GM12878 (cell line): ENCODE measurements at regions of chr11 and their contacts with region 1.

Region 1: GRCh38 chr11:3091791-3092602 is 34.8 kb upstream of the CARS1 start:
- DNase-seq: peak; percentile 19
- ATAC-seq: peak; percentile 97
- H3K4me3 ChIP-seq: no peak overlapping the region
- H3K27ac ChIP-seq: no peak overlapping the region
- H3K4me1 ChIP-seq: no peaks in the 10 kb centered on the region
- H3K27me3 ChIP-seq: no peaks in the 10 kb centered on the region
- CTCF ChIP-seq: peak; percentile 98
- EP300 ChIP-seq: no peak
- POLR2A ChIP-seq: no peak
- RAD21 ChIP-seq: peak; percentile 85

Region 2: DNA sequence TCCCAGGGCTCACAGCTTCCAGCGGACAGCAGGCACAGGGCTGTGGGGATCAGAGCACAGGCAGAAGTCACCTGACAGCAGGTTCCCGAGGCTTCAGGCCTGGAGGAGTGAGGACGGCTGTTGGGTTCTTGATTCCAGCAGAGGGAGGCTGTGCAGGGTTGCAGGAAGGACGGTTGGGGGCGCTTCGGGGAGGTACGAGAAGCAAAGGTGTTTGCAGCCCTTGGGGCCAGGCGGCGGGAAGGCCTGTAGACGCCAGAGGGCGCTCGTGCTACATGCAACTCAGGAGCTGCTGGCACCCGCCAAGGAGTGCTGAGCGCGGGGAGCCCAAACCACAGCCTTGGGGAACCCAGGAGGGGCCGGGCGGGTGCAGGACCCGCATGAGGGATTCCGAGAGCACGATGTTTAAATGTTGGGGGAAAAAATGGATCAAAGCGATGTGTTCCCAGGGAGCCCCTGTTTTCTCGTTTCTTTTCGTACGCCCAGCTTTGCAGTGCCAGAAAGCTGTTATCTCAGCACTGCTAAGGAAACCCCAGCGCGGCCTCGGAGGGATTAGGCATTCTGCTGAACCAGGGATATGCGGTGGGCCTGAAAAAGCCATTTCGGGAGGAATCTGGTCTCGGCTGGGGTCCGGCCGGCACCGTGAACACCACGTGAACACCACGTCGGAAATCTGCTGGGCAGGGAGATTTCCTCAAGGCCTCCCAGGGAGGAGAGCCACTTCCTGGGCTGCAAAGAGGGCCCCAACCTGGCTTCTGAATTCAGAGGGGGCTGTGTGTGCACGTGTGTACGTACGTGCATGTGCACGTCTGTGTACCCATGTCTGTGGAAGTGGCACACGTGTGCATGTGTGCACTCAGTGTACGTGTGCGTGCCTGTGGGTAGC is 559.1 kb before region 1 on chr11:
- CTCF ChIA-PET with region 1: interaction called, 10 read pairs
- POLR2A ChIA-PET with region 1: no interaction called
- RAD21 ChIA-PET with region 1: interaction called, 17 read pairs
- SMC1A ChIA-PET with region 1: no interaction called
- in situ Hi-C with region 1: loop called (anchors 5 kb)
- intact Hi-C with region 1: loop called (anchors 5 kb)
- DNase-seq: peak; percentile 38
- ATAC-seq: peak; percentile 92
- H3K4me3 ChIP-seq: no peak overlapping the region
- H3K27ac ChIP-seq: no peak overlapping the region
- H3K4me1 ChIP-seq: peaks cover 8% of the 10 kb centered on the region
- H3K27me3 ChIP-seq: peaks cover 1 to 3% of the 10 kb centered on the region in 2 experiments; a peak in 1 of 4 replicates
- CTCF ChIP-seq: peak; percentile 94 to 98 (median 98)
- EP300 ChIP-seq: no peak
- POLR2A ChIP-seq: no peak
- RAD21 ChIP-seq: peak; percentile 93

Region 3: DNA sequence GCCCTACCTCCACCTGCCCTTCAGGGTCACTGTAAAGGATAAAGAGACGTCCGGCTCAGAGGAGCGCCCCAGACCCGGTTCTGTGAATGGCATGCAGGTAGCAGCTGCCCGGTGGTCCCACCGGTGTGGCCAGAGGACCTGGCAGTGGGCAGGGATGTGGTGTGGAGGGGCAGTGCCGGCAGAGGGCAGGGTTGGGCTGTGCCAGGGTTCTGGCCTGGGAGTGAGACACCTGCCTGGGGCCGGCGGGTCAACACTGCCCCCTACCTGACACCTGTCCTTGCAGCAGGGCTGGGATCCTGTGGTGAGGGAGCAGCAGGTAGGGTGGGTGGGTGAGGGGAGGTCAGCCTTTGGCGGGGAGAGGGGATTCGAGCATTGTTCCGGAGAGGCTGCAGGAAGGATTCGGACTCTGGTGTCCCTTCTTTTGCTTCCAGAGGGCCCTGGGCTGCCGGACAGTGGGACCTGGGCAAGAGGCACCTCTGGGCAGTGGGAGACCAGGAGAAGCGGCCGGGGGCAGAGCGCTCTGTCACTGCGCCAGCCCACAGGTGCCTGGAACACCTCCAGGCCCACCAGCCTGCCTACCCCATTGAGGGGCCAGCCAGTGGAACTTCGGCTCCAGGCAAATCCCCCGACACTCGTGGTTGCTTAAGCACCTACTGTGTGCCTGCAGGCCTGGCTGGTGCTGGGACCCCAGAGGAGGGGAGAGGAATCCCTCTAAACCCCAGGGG is 161.1 kb before region 1 on chr11:
- CTCF ChIA-PET with region 1: interaction called, 16 read pairs
- POLR2A ChIA-PET with region 1: interaction called, 3 read pairs
- RAD21 ChIA-PET with region 1: interaction called, 9 read pairs
- SMC1A ChIA-PET with region 1: no interaction called
- in situ Hi-C with region 1: no loop called
- intact Hi-C with region 1: loop called (anchors 10 kb)
- DNase-seq: peak; percentile 16
- ATAC-seq: peak; percentile 61
- H3K4me3 ChIP-seq: peak overlapping the region; percentile 62; the same call in 1 of the 2 replicates
- H3K27ac ChIP-seq: no peak overlapping the region
- H3K4me1 ChIP-seq: peaks cover 21% of the 10 kb centered on the region
- H3K27me3 ChIP-seq: peaks cover 3 to 15% of the 10 kb centered on the region in 2 experiments
- CTCF ChIP-seq: peak; percentile 48 to 89 (median 86)
- EP300 ChIP-seq: no peak
- POLR2A ChIP-seq: no peak
- RAD21 ChIP-seq: peak; percentile 62

Region 4: GRCh38 chr11:2992234-2992996 is 99.6 kb before region 1 on chr11 and contains the start of gene NAP1L4:
- CTCF ChIA-PET with region 1: interaction called, 7 read pairs
- POLR2A ChIA-PET with region 1: no interaction called
- RAD21 ChIA-PET with region 1: interaction called, 8 read pairs
- SMC1A ChIA-PET with region 1: interaction called, 15 read pairs
- in situ Hi-C with region 1: no loop called
- intact Hi-C with region 1: no loop called
- DNase-seq: peak; percentile 91
- ATAC-seq: peak; percentile 90
- H3K4me3 ChIP-seq: peak within 1 kb of the TSS; percentile 97
- H3K27ac ChIP-seq: peak within 1 kb of the TSS; percentile 84
- H3K4me1 ChIP-seq: peaks cover 6% of the 10 kb centered on the region
- H3K27me3 ChIP-seq: no peaks in the 10 kb centered on the region
- CTCF ChIP-seq: no peak
- EP300 ChIP-seq: no peak
- POLR2A ChIP-seq: peak; percentile 87
- RAD21 ChIP-seq: no peak
- polyA plus RNA-seq, gene NAP1L4: 24.8 to 44.0 TPM

Region 5: GRCh38 chr11:3021125-3021524 is 70.9 kb before region 1 on chr11:
- CTCF ChIA-PET with region 1: interaction called, 20 read pairs
- POLR2A ChIA-PET with region 1: no interaction called
- RAD21 ChIA-PET with region 1: interaction called, 7 read pairs
- SMC1A ChIA-PET with region 1: interaction called, 3 read pairs
- in situ Hi-C with region 1: no loop called
- intact Hi-C with region 1: no loop called
- DNase-seq: no peak
- ATAC-seq: peak; percentile 83
- H3K4me3 ChIP-seq: no peak overlapping the region
- H3K27ac ChIP-seq: no peak overlapping the region
- H3K4me1 ChIP-seq: peaks cover 17% of the 10 kb centered on the region
- H3K27me3 ChIP-seq: no peaks in the 10 kb centered on the region
- CTCF ChIP-seq: peak; percentile 50 to 56 (median 55)
- EP300 ChIP-seq: no peak
- POLR2A ChIP-seq: no peak
- RAD21 ChIP-seq: peak; percentile 74

Region 6: DNA sequence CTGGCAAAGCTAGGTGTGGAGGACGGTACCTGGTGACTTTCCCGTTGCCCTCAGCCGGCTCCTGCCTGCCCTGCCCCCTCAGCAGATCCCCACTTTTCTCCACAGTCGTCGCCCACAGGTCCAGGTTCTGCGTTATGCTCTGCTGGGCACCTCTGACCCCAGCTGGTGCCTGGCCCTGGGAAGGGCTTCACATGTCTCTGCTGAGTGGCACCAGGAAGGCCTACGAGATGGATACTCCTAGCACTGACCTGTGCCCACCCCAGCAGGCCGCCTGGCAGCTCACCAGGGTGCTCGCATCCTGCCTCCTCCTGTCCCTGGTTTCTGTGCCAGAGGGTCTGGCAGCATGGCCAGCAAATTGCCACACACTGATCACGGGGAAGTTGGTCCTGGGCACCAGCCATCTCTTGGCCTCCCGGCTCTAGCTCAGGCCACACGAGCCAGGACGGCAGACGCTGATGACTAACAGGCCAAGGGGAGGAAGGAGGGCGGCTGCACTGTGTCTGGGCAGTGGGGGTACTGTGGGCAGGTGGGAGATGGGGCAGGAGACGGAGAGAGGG is 48.6 kb before region 1 on chr11:
- CTCF ChIA-PET with region 1: interaction called, 143 read pairs
- POLR2A ChIA-PET with region 1: no interaction called
- RAD21 ChIA-PET with region 1: interaction called, 58 read pairs
- SMC1A ChIA-PET with region 1: interaction called, 47 read pairs
- in situ Hi-C with region 1: loop called (anchors 5 kb)
- intact Hi-C with region 1: no loop called
- DNase-seq: no peak
- ATAC-seq: no peak
- H3K4me3 ChIP-seq: no peak overlapping the region
- H3K27ac ChIP-seq: no peak overlapping the region
- H3K4me1 ChIP-seq: no peaks in the 10 kb centered on the region
- H3K27me3 ChIP-seq: no peaks in the 10 kb centered on the region
- CTCF ChIP-seq: no peak
- EP300 ChIP-seq: no peak
- POLR2A ChIP-seq: 0 out of 2 replicates have a peak, but pooled peaks have one; percentile 16
- RAD21 ChIP-seq: no peak

Region 7: GRCh38 chr11:3057069-3057963 is 34.7 kb before region 1 on chr11 and contains the start of gene CARS1:
- CTCF ChIA-PET with region 1: interaction called, 95 read pairs
- POLR2A ChIA-PET with region 1: interaction called, 3 read pairs
- RAD21 ChIA-PET with region 1: interaction called, 58 read pairs
- SMC1A ChIA-PET with region 1: interaction called, 52 read pairs
- in situ Hi-C with region 1: no loop called
- intact Hi-C with region 1: loop called (anchors 5 kb)
- DNase-seq: peak; percentile 45
- ATAC-seq: peak; percentile 98
- H3K4me3 ChIP-seq: peak within 1 kb of the TSS; percentile 91
- H3K27ac ChIP-seq: peak within 1 kb of the TSS; percentile 86
- H3K4me1 ChIP-seq: peaks cover 7% of the 10 kb centered on the region
- H3K27me3 ChIP-seq: no peaks in the 10 kb centered on the region; a peak in 1 of 4 replicates
- CTCF ChIP-seq: no peak
- EP300 ChIP-seq: no peak
- POLR2A ChIP-seq: peak; percentile 91
- RAD21 ChIP-seq: no peak
- polyA plus RNA-seq, gene CARS1: 7.8 to 19.7 TPM

Region 8: GRCh38 chr11:3081386-3081751 is 10.6 kb before region 1 on chr11:
- CTCF ChIA-PET with region 1: no interaction called
- POLR2A ChIA-PET with region 1: no interaction called
- RAD21 ChIA-PET with region 1: no interaction called
- SMC1A ChIA-PET with region 1: no interaction called
- in situ Hi-C with region 1: no loop called
- intact Hi-C with region 1: no loop called
- DNase-seq: no peak
- ATAC-seq: no peak
- H3K4me3 ChIP-seq: no peak overlapping the region
- H3K27ac ChIP-seq: no peak overlapping the region
- H3K4me1 ChIP-seq: no peaks in the 10 kb centered on the region
- H3K27me3 ChIP-seq: no peaks in the 10 kb centered on the region
- CTCF ChIP-seq: no peak
- EP300 ChIP-seq: no peak
- POLR2A ChIP-seq: no peak
- RAD21 ChIP-seq: no peak